Posterior cingulate gyrus (tissue), 11 donors: ENCODE measurements at regions of chr14 and their contacts with region 1.

Region 1: GRCh38 chr14:59055439-59056045 is 132.9 kb upstream of the DAAM1 start:
- DNase-seq: peak in 2 of 10 donors; percentile 20 to 33

Region 2: GRCh38 chr14:58501214-58501816 is 554.2 kb before region 1 on chr14:
- intact Hi-C with region 1: loop called (anchors 2 kb)
- DNase-seq: peak in 1 of 10 donors; percentile 28

Region 3: DNA sequence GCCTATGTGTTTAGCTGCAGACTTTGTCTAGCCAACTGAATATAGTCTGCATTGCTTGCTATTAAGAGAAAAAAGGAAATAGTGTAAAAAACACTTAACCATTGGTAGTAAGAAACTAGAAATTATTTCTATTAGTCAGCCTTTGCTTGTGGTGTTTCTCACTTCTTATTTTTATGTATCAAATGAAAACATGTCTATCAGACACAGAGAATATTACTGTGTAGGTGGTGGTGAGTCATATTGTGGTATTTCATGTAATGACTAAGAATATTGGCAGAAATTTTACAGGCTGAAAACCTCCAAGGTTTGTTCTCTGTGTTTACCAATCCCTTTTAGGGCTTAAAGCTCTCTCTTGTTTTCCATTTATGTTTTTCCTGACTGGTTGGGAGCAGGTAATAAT is 220.1 kb after region 1 on chr14:
- intact Hi-C with region 1: no loop called
- DNase-seq: no peak